ENCODE measurements at regions of chr4 and their contacts with region 1.

Region 1: DNA sequence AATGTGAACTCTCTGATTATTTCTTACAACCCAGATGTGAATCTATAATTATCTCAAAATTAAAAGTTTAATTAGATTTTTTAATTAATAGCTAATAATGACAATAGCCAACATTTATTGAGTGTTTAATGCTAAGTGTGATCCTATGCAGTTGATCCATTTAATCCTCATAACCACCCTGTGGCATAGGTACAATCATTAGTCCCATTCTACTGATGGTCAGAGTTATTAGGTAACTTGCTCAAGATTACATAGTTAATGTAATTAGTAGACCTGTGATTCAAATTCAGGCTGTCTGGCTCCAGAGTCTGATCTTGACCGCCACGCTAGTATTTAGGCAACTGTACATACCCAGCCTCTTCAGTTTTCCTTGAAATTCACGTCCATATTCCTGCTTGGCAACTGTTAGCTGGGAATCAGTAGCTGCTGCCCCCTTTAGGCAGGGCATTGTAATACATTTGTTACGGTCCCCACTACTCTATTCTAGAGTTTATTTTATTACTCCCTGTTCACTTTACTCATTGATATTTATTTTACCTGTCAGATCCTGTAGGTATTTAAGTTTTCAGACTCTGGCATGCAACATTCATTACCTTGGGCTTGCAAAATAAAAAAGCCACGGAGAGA is 20.6 kb upstream of the TEC start:
- DNase-seq: peak; percentile 36
- ATAC-seq: peak; percentile 92
- H3K4me3 ChIP-seq: no peak overlapping the region
- H3K27ac ChIP-seq: no peak overlapping the region
- H3K4me1 ChIP-seq: peaks cover 0 to 4% of the 10 kb centered on the region in 2 experiments; a peak in 2 of 4 replicates
- H3K27me3 ChIP-seq: no peaks in the 10 kb centered on the region
- CTCF ChIP-seq: peak; percentile 49 to 84 (median 84); a peak in 5 of 6 replicates
- POLR2A ChIP-seq: no peak
- RAD21 ChIP-seq: peak; percentile 63

Region 2: GRCh38 chr4:48275247-48275646 is 15.0 kb before region 1 on chr4:
- CTCF ChIA-PET with region 1: interaction called, 19 read pairs
- POLR2A ChIA-PET with region 1: no interaction called
- RAD21 ChIA-PET with region 1: no interaction called
- intact Hi-C with region 1: no loop called
- DNase-seq: peak; percentile 38
- ATAC-seq: peak; percentile 87
- H3K4me3 ChIP-seq: no peak overlapping the region
- H3K27ac ChIP-seq: no peak overlapping the region
- H3K4me1 ChIP-seq: peaks cover 0 to 10% of the 10 kb centered on the region in 2 experiments; a peak in 3 of 4 replicates
- H3K27me3 ChIP-seq: no peaks in the 10 kb centered on the region
- CTCF ChIP-seq: peak; percentile 54 to 89 (median 86); a peak in 5 of 6 replicates
- POLR2A ChIP-seq: no peak
- RAD21 ChIP-seq: peak; percentile 62

Region 3: GRCh38 chr4:48963042-48963679 is 672.9 kb after region 1 on chr4:
- CTCF ChIA-PET with region 1: no interaction called
- POLR2A ChIA-PET with region 1: no interaction called
- RAD21 ChIA-PET with region 1: no interaction called
- intact Hi-C with region 1: no loop called
- DNase-seq: peak; percentile 81
- ATAC-seq: peak; percentile 94
- H3K4me3 ChIP-seq: no peak overlapping the region
- H3K27ac ChIP-seq: no peak overlapping the region
- H3K4me1 ChIP-seq: no peaks in the 10 kb centered on the region
- H3K27me3 ChIP-seq: no peaks in the 10 kb centered on the region
- CTCF ChIP-seq: peak; percentile 98 to 99 (median 99)
- POLR2A ChIP-seq: no peak
- RAD21 ChIP-seq: peak; percentile 97

Measured in HCT116 (cell line).